Upper lobe of right lung (tissue), 1 donor: ENCODE measurements at regions of chr17 and their contacts with region 1.

Region 1: GRCh38 chr17:1628856-1629646 is 417 bp upstream of the SLC43A2 start:
- DNase-seq: peak; percentile 98
- ATAC-seq: peak; percentile 88
- H3K4me3 ChIP-seq: peak overlapping the region; percentile 81
- H3K27ac ChIP-seq: peak overlapping the region; percentile 92
- H3K4me1 ChIP-seq: peaks cover 40% of the 10 kb centered on the region
- H3K27me3 ChIP-seq: no peaks in the 10 kb centered on the region
- CTCF ChIP-seq: peak; percentile 43

Region 2: GRCh38 chr17:882827-883585 is 746.0 kb before region 1 on chr17:
- intact Hi-C with region 1: no loop called
- DNase-seq: no peak
- ATAC-seq: peak; percentile 12
- H3K4me3 ChIP-seq: no peak overlapping the region
- H3K27ac ChIP-seq: peak overlapping the region; percentile 74
- H3K4me1 ChIP-seq: peaks cover 43% of the 10 kb centered on the region
- H3K27me3 ChIP-seq: no peaks in the 10 kb centered on the region
- CTCF ChIP-seq: no peak

Region 3: GRCh38 chr17:1573916-1574696 is 54.9 kb before region 1 on chr17:
- intact Hi-C with region 1: loop called (anchors 5 kb)
- DNase-seq: peak; percentile 94
- ATAC-seq: peak; percentile 69
- H3K4me3 ChIP-seq: no peak overlapping the region
- H3K27ac ChIP-seq: peak overlapping the region; percentile 58
- H3K4me1 ChIP-seq: peaks cover 45% of the 10 kb centered on the region
- H3K27me3 ChIP-seq: no peaks in the 10 kb centered on the region
- CTCF ChIP-seq: peak; percentile 98